ENCODE measurements at regions of chr15 and their contacts with region 1.

Region 1: GRCh38 chr15:69853581-69853980 is 244.1 kb downstream of the TLE3 start:
- DNase-seq: peak; percentile 85 to 92
- H3K4me3 ChIP-seq: no peak overlapping the region
- H3K27ac ChIP-seq: peak overlapping the region; percentile 91
- H3K4me1 ChIP-seq: peaks cover 38% of the 10 kb centered on the region
- H3K27me3 ChIP-seq: no peaks in the 10 kb centered on the region
- CTCF ChIP-seq: no peak

Region 2: DNA sequence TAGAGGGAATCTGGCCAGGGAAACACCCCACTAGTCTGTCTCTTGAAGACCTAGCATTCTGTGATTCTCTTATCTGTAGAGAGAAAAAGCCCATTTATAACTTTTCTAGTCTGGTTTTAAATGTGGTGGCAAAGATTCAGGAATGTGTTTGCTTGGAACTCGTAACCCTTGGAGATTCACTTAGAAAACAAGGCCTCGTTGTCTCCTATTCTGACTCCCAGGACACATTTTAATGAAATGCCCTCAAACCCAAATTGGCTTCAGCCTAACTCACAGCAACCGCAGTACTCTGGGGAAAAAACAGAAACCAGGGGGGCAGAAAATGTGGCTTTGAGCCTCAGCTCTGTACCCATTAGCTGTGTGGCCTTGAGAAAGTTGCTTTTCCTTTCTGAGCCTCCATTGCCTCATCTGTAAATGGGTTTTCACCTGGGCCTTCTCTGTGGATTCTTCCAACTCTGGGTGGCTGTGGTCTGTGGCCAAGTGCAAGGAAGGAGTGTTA is 364.5 kb before region 1 on chr15:
- CTCF ChIA-PET with region 1: no interaction called
- POLR2A ChIA-PET with region 1: no interaction called
- intact Hi-C with region 1: loop called (anchors 5 kb)
- DNase-seq: no peak
- H3K4me3 ChIP-seq: no peak overlapping the region
- H3K27ac ChIP-seq: no peak overlapping the region
- H3K4me1 ChIP-seq: peaks cover 10% of the 10 kb centered on the region
- H3K27me3 ChIP-seq: no peaks in the 10 kb centered on the region
- CTCF ChIP-seq: no peak

Region 3: DNA sequence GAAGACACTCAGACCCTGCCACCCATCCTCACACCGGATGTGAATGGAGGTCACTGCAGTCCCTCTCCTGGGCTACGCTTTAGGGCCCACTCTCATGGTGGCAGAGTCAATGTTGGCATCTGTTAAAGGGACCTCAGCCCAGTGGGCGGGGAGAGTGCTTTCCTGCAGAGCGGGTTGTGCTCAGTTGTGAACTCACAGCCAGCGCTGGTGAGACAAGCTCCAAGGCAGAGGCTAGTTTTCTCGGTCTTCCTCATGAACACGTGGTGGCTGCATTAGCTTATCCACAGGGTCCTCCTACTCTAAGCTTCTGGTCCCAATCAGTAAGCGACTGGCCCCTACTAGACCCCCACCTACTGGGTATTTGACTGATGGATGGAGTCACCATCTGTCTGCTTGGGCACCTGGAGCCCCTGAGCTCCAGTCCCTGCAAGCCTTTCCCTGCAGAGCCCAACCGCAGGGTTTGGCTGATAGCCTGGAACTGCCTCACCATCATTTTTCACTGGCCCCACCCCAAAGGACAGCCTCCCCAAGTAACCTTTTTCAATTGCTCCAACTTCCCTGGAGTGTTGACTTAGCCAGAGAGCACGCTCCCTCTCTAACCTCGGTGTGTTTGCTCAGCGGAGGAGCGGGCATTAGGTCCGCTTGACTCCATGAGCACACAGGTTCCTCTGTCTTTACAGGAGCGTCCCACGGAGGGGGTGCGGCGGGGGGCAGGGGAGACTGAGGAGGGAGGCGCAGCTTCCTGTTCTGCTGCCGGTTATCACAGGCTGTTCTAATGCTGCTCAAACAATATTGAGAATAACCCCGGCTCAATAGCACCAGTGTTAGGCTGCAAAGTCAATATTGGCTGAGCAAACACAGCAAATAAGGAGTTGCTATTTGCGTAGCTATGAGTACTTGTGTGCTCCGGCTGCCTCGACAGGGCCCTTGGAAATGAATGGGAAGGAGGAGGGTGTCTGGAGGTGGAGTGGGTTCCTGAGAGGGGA is 259.3 kb before region 1 on chr15:
- CTCF ChIA-PET with region 1: no interaction called
- POLR2A ChIA-PET with region 1: no interaction called
- intact Hi-C with region 1: loop called (anchors 5 kb)
- DNase-seq: peak; percentile 83 to 98
- H3K4me3 ChIP-seq: peak overlapping the region; percentile 5; the same call in 1 of the 2 replicates
- H3K27ac ChIP-seq: peak overlapping the region; percentile 85
- H3K4me1 ChIP-seq: peaks cover 49% of the 10 kb centered on the region
- H3K27me3 ChIP-seq: peaks cover 27% of the 10 kb centered on the region
- CTCF ChIP-seq: no peak

Region 4: DNA sequence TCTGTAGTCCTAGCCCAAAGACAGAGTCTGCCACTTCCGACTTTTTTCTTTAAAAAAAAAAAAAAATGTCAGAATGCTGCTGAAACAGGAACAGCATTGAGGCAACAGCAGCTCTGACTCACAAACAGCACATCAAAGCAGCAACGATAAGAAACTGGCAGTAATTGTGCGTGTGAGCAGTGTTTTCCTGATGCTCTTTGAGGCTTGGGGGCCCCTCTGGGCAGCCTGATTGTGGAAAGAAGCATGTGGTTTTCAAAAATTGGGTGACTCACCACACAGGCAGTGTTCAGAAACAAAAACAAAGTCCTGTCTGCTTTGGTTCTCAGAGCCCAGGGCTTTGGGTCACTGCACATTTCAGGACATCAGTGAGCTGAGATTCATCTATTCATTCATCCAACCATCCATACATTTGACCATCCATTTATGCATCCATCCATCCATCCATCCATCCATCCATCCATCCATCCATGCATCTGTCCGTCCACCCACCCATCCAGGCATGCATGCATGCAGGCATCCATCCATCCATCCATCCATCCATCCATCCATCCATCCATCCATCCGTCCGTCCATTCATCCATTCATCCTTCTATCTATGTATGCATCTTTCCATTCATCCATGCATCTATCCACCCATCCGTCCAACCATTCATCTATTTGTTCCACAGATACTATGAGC is 92.6 kb before region 1 on chr15:
- CTCF ChIA-PET with region 1: no interaction called
- POLR2A ChIA-PET with region 1: no interaction called
- intact Hi-C with region 1: loop called (anchors 2 kb)
- DNase-seq: peak; percentile 79 to 95
- H3K4me3 ChIP-seq: no peak overlapping the region
- H3K27ac ChIP-seq: peak overlapping the region; percentile 51
- H3K4me1 ChIP-seq: peaks cover 49% of the 10 kb centered on the region
- H3K27me3 ChIP-seq: no peaks in the 10 kb centered on the region
- CTCF ChIP-seq: no peak

Region 5: DNA sequence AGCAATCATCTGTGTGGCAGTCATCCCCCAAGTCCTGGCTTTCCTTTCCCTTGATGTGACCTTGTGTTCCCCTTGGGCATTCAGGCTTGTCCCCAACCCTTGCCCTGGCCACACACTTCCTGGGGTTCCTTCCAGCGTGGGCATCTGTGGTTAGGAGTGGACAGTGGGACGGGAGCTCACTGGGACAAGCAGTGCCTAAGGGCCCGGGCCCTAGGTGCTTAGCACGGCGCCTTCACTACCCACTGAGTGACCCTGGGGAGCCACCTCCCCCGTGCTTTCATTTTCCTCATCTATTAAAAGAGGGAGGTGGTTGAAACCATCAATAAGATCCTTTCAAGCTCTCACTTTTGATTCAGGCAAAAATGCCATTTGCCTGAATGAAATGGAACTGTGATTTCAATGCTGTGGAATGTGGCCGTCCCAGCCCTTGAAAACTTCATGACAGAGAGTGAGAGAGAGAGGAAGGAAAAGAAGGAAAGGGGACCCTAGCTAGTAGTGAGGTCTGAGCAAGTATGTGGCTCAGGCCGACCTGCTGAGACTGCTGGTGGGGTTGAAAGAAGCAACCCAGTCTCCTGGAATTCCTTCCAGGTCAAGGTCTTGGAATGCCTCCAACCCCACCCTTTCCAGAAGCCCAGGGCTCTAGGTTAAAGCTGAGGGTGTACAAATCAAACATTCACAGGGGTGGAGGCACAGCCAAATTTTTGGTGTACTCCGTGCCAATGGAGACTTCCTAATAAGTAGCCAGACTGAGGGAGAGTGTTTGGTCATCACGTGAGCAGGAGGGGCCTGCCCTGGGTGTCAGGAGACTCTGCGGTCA is 58.7 kb before region 1 on chr15:
- CTCF ChIA-PET with region 1: no interaction called
- POLR2A ChIA-PET with region 1: no interaction called
- intact Hi-C with region 1: loop called (anchors 5 kb)
- DNase-seq: peak; percentile 70 to 85
- H3K4me3 ChIP-seq: peak overlapping the region; percentile 34; the same call in 1 of the 2 replicates
- H3K27ac ChIP-seq: peak overlapping the region; percentile 92
- H3K4me1 ChIP-seq: peaks cover 37% of the 10 kb centered on the region
- H3K27me3 ChIP-seq: no peaks in the 10 kb centered on the region
- CTCF ChIP-seq: no peak

Region 6: GRCh38 chr15:69807755-69808154 is 45.8 kb before region 1 on chr15:
- CTCF ChIA-PET with region 1: no interaction called
- POLR2A ChIA-PET with region 1: interaction called, 10 read pairs
- intact Hi-C with region 1: no loop called
- DNase-seq: peak; percentile 68 to 74
- H3K4me3 ChIP-seq: no peak overlapping the region
- H3K27ac ChIP-seq: no peak overlapping the region
- H3K4me1 ChIP-seq: peaks cover 30% of the 10 kb centered on the region
- H3K27me3 ChIP-seq: no peaks in the 10 kb centered on the region
- CTCF ChIP-seq: no peak

Region 7: DNA sequence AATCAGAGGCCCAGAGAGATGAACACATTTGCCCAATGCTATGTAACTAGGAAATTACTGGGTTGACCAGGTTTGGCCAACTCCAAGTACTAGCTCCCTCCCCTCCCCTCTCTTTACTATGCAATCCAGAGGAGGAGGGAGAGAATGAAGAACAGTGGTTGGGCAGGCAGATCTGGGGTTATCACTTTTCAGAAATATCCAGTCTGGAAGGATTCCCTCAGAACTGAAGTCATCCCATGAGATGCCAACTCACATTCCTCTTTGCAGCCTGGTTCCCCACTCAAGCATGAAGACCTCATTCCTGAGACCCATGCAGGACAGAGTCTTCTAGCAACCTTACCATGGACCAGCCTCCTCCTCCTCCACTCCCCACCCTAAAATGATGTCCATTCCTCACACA is 43.0 kb after region 1 on chr15:
- CTCF ChIA-PET with region 1: no interaction called
- POLR2A ChIA-PET with region 1: no interaction called
- intact Hi-C with region 1: no loop called
- DNase-seq: no peak
- H3K4me3 ChIP-seq: no peak overlapping the region
- H3K27ac ChIP-seq: no peak overlapping the region
- H3K4me1 ChIP-seq: no peaks in the 10 kb centered on the region
- H3K27me3 ChIP-seq: peaks cover 3% of the 10 kb centered on the region; the same call in 1 of the 2 replicates
- CTCF ChIP-seq: no peak

Region 8: GRCh38 chr15:69919816-69920215 is 66.2 kb after region 1 on chr15:
- CTCF ChIA-PET with region 1: no interaction called
- POLR2A ChIA-PET with region 1: no interaction called
- intact Hi-C with region 1: no loop called
- DNase-seq: no peak
- H3K4me3 ChIP-seq: no peak overlapping the region
- H3K27ac ChIP-seq: no peak overlapping the region
- H3K4me1 ChIP-seq: no peaks in the 10 kb centered on the region
- H3K27me3 ChIP-seq: no peaks in the 10 kb centered on the region
- CTCF ChIP-seq: no peak

Region 9: DNA sequence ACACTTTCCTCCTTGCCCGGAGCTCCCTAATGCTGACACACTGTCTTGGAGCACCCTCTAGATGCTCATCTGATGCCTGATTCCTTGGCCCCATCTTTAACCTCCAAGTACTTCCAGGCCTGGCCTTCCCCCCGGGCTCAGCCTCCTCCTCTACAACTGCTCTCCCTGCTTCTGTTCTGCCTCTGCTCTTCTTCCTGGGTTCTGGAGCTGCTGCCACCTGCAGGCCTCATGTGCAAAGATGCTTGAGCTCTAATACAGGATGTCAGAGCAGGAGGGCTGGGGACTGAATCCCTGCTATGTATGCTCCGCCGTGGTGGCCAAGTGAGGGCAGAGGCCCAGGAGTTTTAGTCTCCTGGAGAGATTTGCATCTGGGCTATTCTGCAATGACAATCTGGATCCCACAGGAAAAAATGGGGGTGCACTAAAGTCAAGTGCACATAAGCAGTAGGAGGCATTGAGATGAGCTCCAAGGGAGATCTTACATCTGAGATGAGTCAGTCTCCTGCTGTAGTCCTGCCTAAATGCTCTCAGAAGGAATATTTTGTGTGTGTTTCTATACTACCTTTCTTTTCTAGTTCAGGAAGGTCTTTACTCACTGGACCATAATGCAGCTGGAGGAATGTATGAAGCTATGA is 613.4 kb after region 1 on chr15:
- CTCF ChIA-PET with region 1: no interaction called
- POLR2A ChIA-PET with region 1: no interaction called
- intact Hi-C with region 1: loop called (anchors 10 kb)
- DNase-seq: peak; percentile 42 to 49
- H3K4me3 ChIP-seq: no peak overlapping the region
- H3K27ac ChIP-seq: no peak overlapping the region
- H3K4me1 ChIP-seq: peaks cover 63% of the 10 kb centered on the region
- H3K27me3 ChIP-seq: no peaks in the 10 kb centered on the region
- CTCF ChIP-seq: peak; percentile 70